ENCODE measurements at regions of chr17 and their contacts with region 1.

Region 1: GRCh38 chr17:55437159-55437605 is 15.5 kb upstream of the MMD start:
- DNase-seq: peak; percentile 93
- ATAC-seq: peak; percentile 71
- H3K4me3 ChIP-seq: peak overlapping the region; percentile 36
- H3K27ac ChIP-seq: peak overlapping the region; percentile 72
- H3K4me1 ChIP-seq: peaks cover 23% of the 10 kb centered on the region
- H3K27me3 ChIP-seq: no peaks in the 10 kb centered on the region
- CTCF ChIP-seq: no peak
- EP300 ChIP-seq: peak; percentile 4 to 70; a peak in 2 of 4 replicates
- POLR2A ChIP-seq: no peak
- RAD21 ChIP-seq: peak; percentile 25; the same call in 1 of the 2 replicates

Region 2: GRCh38 chr17:55426546-55427410 is 10.4 kb before region 1 on chr17:
- CTCF ChIA-PET with region 1: interaction called, 5 read pairs
- POLR2A ChIA-PET with region 1: interaction called, 106 read pairs
- RAD21 ChIA-PET with region 1: interaction called, 99 read pairs
- SMC1A ChIA-PET with region 1: interaction called, 359 read pairs
- in situ Hi-C with region 1: no loop called
- intact Hi-C with region 1: loop called (anchors 1 kb)
- DNase-seq: no peak
- ATAC-seq: peak; percentile 84
- H3K4me3 ChIP-seq: no peak overlapping the region
- H3K27ac ChIP-seq: peak overlapping the region; percentile 76
- H3K4me1 ChIP-seq: peaks cover 49% of the 10 kb centered on the region
- H3K27me3 ChIP-seq: no peaks in the 10 kb centered on the region
- CTCF ChIP-seq: no peak
- EP300 ChIP-seq: peak; percentile 25 to 46; a peak in 2 of 4 replicates
- POLR2A ChIP-seq: no peak
- RAD21 ChIP-seq: no peak

Region 3: GRCh38 chr17:55458977-55459376 is 21.8 kb after region 1 on chr17:
- CTCF ChIA-PET with region 1: interaction called, 6 read pairs
- POLR2A ChIA-PET with region 1: interaction called, 6 read pairs
- RAD21 ChIA-PET with region 1: interaction called, 8 read pairs
- SMC1A ChIA-PET with region 1: interaction called, 19 read pairs
- in situ Hi-C with region 1: no loop called
- intact Hi-C with region 1: loop called (anchors 2 kb)
- DNase-seq: no peak
- ATAC-seq: peak; percentile 87
- H3K4me3 ChIP-seq: no peak overlapping the region
- H3K27ac ChIP-seq: no peak overlapping the region
- H3K4me1 ChIP-seq: peaks cover 15% of the 10 kb centered on the region
- H3K27me3 ChIP-seq: no peaks in the 10 kb centered on the region
- CTCF ChIP-seq: no peak
- EP300 ChIP-seq: peak; percentile 40 to 49; a peak in 2 of 4 replicates
- POLR2A ChIP-seq: no peak
- RAD21 ChIP-seq: no peak

Region 4: GRCh38 chr17:55466671-55467070 is 29.5 kb after region 1 on chr17:
- CTCF ChIA-PET with region 1: interaction called, 3 read pairs
- POLR2A ChIA-PET with region 1: interaction called, 6 read pairs
- RAD21 ChIA-PET with region 1: interaction called, 8 read pairs
- SMC1A ChIA-PET with region 1: interaction called, 19 read pairs
- in situ Hi-C with region 1: no loop called
- intact Hi-C with region 1: loop called (anchors 2 kb)
- DNase-seq: peak; percentile 55
- ATAC-seq: peak; percentile 51
- H3K4me3 ChIP-seq: no peak overlapping the region
- H3K27ac ChIP-seq: no peak overlapping the region
- H3K4me1 ChIP-seq: peaks cover 18% of the 10 kb centered on the region
- H3K27me3 ChIP-seq: no peaks in the 10 kb centered on the region
- CTCF ChIP-seq: no peak
- EP300 ChIP-seq: no peak
- POLR2A ChIP-seq: no peak
- RAD21 ChIP-seq: no peak

Region 5: DNA sequence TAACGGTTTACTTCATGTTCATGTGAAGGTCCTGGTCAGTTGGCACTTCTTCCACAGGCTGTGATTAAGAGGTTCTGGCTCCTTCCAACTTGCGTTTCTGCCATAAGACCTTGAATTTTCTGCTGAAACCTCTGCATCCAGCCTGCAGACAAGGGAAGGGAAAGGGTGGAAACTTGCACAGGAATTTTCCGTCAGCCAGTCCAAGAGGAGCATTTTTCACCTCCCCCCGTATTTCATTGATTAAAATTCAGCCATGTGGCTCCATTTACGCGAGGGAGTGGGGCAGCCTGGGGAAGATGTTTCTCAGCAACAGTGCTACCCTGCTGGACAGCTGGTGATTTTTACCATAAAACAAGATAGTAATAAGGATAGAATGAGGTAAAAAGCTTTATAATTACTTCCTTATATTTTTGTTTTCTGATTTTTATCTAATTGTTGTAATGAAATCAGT is 175.5 kb after region 1 on chr17:
- CTCF ChIA-PET with region 1: no interaction called
- POLR2A ChIA-PET with region 1: no interaction called
- RAD21 ChIA-PET with region 1: no interaction called
- SMC1A ChIA-PET with region 1: no interaction called
- in situ Hi-C with region 1: no loop called
- intact Hi-C with region 1: no loop called
- DNase-seq: no peak
- ATAC-seq: no peak
- H3K4me3 ChIP-seq: no peak overlapping the region
- H3K27ac ChIP-seq: no peak overlapping the region
- H3K4me1 ChIP-seq: no peaks in the 10 kb centered on the region
- H3K27me3 ChIP-seq: no peaks in the 10 kb centered on the region; a peak in 1 of 4 replicates
- CTCF ChIP-seq: no peak
- EP300 ChIP-seq: no peak
- POLR2A ChIP-seq: no peak
- RAD21 ChIP-seq: no peak